Esophagus muscularis mucosa (tissue), 4 donors: ENCODE measurements at regions of chr12 and their contacts with region 1.

Region 1: GRCh38 chr12:129002427-129002826 is 149.1 kb downstream of the GLT1D1 start:
- DNase-seq: no peak
- H3K4me3 ChIP-seq: no peak overlapping the region
- H3K27ac ChIP-seq: no peak overlapping the region
- H3K4me1 ChIP-seq: no peaks in the 10 kb centered on the region
- H3K27me3 ChIP-seq: peaks cover 0 to 12% (median 0%) of the 10 kb centered on the region in 4 donors
- CTCF ChIP-seq: no peak
- EP300 ChIP-seq: no peak
- POLR2A ChIP-seq: no peak

Region 2: DNA sequence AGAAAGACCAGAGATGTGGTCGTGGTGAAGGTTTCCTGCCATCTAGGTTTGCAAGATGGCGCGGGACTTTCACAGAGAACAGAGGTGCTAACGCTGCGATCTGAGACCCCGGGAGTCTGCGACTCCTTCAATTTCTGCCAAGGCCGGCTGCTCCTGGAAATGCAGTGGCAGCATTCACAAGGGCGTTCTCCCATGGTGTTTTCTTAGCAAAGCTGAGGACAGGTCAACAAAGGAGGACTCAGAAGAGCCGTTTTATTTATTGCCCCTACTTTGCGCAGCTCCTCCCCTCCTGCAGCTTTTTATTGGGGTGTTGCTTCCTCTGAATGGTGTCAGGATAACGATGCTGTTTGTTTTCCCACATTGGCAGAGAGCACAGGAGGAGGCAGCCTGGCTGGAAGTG is 649.1 kb before region 1 on chr12:
- intact Hi-C with region 1: loop called (anchors 5 kb)
- DNase-seq: no peak
- H3K4me3 ChIP-seq: no peak overlapping the region
- H3K27ac ChIP-seq: no peak overlapping the region
- H3K4me1 ChIP-seq: no peaks in the 10 kb centered on the region
- H3K27me3 ChIP-seq: peaks cover 0 to 33% (median 0%) of the 10 kb centered on the region in 4 donors
- CTCF ChIP-seq: no peak
- EP300 ChIP-seq: no peak
- POLR2A ChIP-seq: no peak

Region 3: DNA sequence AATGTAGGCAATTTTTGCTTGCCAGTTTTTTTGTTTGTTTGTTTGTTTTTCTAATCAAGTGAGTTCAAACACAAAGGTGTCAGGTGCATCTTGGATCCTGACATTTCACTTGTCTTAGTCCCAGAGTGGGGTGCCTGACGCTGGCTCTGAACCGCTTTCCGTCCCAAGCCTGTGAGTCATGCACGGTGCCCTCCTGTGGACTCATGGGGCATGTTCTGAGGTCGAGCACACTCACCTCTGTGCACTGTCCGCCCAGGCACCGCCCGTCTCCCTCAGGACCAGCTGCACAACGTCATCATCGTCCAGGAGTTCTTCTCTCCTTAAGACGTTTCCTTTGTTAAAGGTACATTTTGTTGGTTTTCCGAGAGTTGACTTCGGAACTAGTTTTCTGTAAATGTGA is 51.0 kb before region 1 on chr12:
- intact Hi-C with region 1: no loop called
- DNase-seq: no peak
- H3K4me3 ChIP-seq: no peak overlapping the region
- H3K27ac ChIP-seq: no peak overlapping the region
- H3K4me1 ChIP-seq: no peaks in the 10 kb centered on the region
- H3K27me3 ChIP-seq: no peaks in the 10 kb centered on the region
- CTCF ChIP-seq: no peak
- EP300 ChIP-seq: no peak
- POLR2A ChIP-seq: no peak

Region 4: DNA sequence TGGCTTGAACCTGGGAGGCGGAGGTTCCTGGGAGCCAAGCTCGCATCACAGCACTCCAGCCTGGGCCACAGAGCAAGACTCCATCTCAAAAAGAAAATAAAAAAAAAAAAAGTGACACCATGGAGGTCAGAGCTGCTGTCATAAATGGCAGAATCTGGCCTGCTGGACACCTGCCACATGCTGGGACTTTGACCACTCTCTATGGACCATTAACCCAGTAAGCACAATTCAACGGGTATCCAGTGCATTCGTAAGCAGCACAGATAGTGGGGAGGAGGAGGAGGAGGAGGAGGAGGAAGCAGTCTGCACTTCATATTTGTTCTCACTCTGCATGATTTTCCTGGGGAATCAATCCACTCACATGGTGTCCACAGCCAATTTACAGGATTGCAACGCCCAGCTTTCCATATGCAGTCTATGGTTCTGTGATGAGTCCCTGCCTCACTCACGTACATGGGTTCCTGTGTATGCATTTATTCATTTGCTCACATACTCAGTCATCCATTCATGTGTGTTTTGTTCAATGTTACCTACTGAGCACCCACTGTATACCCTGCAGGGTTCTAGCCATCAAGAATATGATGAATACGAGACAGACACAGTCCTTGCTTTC is 177.6 kb after region 1 on chr12:
- intact Hi-C with region 1: no loop called
- DNase-seq: no peak
- H3K4me3 ChIP-seq: no peak overlapping the region
- H3K27ac ChIP-seq: no peak overlapping the region
- H3K4me1 ChIP-seq: no peaks in the 10 kb centered on the region
- H3K27me3 ChIP-seq: peaks cover 0 to 11% (median 0%) of the 10 kb centered on the region in 4 donors
- CTCF ChIP-seq: no peak
- EP300 ChIP-seq: no peak
- POLR2A ChIP-seq: no peak